ENCODE measurements at regions of chr9 and their contacts with region 1.

Region 1: DNA sequence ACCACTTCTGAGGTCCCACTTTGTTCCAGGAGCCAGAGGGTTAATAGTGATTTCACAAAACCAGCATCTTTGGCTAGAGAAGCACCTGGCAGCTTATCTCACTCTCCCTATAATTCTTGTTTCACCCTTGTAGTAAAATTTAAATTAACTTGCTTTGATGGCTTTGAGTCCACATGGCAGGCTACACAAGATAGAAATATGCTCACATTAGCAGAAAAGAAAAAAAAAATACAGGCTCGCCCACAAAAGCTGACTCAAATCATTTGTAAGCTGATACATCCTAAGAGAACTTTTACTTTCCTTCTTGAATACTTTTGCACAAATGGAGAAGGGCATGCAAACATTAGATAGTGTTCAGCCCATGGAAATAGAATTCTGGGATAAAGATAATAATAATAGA is 36.2 kb downstream of the TNFSF15 start:
- DNase-seq: no peak
- H3K4me3 ChIP-seq: no peak overlapping the region
- H3K27ac ChIP-seq: no peak overlapping the region
- H3K4me1 ChIP-seq: no peaks in the 10 kb centered on the region
- H3K27me3 ChIP-seq: no peaks in the 10 kb centered on the region
- CTCF ChIP-seq: no peak

Region 2: GRCh38 chr9:114745108-114745848 is 24.3 kb before region 1 on chr9:
- intact Hi-C with region 1: loop called (anchors 2 kb)
- DNase-seq: no peak
- H3K4me3 ChIP-seq: no peak overlapping the region
- H3K27ac ChIP-seq: no peak overlapping the region
- H3K4me1 ChIP-seq: no peaks in the 10 kb centered on the region
- H3K27me3 ChIP-seq: no peaks in the 10 kb centered on the region
- CTCF ChIP-seq: no peak